ENCODE measurements at regions of chr12 and their contacts with region 1.

Region 1: DNA sequence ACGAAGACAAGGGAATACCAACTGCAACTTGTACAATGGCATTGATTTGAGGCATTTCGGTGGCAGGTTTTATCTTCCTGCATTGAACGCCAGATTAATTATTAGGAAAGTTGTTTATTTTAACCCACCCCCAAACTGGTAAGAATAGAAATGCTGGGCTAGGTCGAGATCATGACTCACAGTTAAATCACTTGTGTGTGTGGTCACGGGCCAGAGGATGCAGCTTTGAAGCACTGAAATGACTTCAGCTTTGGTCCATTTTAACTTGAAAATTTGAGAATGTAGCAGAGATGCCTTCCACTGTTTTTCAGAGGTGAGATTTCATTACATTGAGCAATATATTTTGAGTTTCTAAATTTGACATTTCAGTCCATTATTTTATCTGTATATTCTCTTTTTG is 23.6 kb upstream of the KCNH3 start:
- DNase-seq: peak; percentile 88
- ATAC-seq: peak; percentile 76
- H3K4me3 ChIP-seq: peak overlapping the region; percentile 23; the same call in 1 of the 2 replicates
- H3K27ac ChIP-seq: peak overlapping the region; percentile 44
- H3K4me1 ChIP-seq: peaks cover 40% of the 10 kb centered on the region
- H3K27me3 ChIP-seq: no peaks in the 10 kb centered on the region
- CTCF ChIP-seq: no peak

Region 2: DNA sequence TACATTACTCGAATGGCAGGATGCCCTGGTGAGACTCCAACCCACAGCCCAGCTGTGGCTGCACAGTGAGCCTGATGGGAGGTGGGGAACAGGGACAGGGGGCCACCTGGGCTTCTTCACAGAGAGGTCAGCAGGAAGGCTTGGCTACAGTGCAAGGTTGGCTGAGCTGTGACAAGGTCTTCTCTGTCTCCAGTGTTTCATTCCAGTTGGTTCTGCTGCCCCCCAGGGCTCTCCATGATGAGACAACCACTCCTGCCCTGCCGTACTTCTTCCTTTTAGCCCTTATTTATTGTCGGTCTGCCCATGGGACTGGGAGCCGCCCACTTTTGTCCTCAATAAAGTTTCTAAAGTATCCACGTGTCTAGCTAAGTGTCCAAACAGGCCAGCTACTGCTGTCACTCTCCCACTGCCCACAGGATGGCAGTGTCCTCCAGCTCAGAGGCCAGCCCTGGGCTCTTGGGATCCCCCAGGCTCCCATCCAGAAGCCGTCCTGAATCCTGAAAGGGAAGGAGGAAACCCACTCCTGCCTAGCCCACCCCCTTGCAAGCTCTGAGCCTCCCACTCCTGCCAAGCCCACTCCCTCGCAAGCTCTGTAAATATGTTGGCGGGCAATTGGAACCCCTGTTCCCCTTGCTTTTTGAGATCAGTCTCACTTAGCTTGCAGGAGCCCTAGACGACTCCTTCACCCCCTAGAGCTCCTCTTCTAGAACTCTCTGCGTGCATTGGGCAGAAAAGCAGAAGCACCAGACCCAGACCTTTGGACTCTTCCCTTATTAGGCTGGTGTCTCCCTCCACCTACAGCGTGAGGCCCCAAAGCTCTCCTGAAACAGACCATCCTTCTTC is 183.7 kb before region 1 on chr12:
- CTCF ChIA-PET with region 1: interaction called, 21 read pairs
- POLR2A ChIA-PET with region 1: interaction called, 4 read pairs
- intact Hi-C with region 1: loop called (anchors 1 kb)
- DNase-seq: peak; percentile 66
- ATAC-seq: peak; percentile 90
- H3K4me3 ChIP-seq: no peak overlapping the region
- H3K27ac ChIP-seq: no peak overlapping the region
- H3K4me1 ChIP-seq: no peaks in the 10 kb centered on the region
- H3K27me3 ChIP-seq: no peaks in the 10 kb centered on the region
- CTCF ChIP-seq: peak; percentile 88

Region 3: GRCh38 chr12:49366652-49367380 is 148.4 kb before region 1 on chr12:
- CTCF ChIA-PET with region 1: interaction called, 9 read pairs
- POLR2A ChIA-PET with region 1: interaction called, 16 read pairs
- intact Hi-C with region 1: no loop called
- DNase-seq: peak; percentile 95
- ATAC-seq: peak; percentile 82
- H3K4me3 ChIP-seq: peak overlapping the region; percentile 85
- H3K27ac ChIP-seq: peak overlapping the region; percentile 82
- H3K4me1 ChIP-seq: peaks cover 37% of the 10 kb centered on the region
- H3K27me3 ChIP-seq: no peaks in the 10 kb centered on the region
- CTCF ChIP-seq: peak; percentile 16; the same call in 1 of the 2 replicates

Region 4: DNA sequence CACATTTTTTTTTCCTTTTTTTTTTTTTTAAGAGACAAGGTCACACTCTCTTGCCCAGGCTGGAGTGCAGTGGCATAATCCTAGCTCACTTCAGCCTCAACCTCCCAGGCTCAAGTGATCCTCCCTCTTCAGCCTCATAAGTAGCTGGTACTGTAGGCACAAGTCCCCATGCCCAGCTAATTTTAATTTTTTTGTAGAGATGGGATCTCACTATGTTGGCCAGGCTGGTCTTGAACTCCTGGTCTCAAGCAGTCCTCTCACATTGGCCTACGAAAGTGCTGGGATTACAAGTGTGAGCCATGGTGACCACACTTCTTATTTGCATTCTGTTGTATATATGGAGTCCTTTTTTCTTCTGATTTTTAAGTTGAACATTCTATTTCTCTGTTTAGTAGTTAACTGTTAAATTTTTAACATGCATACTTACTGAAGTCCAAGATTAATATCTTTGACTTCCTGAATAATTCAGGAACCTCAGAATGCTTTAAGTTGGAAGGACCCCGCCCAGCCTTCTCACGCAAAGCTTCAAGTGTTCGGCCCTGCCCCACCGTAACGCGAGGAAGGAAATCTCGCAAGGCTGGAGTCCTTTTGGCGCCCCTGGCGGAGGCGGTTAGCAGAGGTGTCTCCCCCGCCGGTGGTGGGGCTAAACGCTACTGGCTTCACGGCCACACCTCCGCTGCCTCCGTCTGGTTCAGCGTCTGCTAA is 126.4 kb before region 1 on chr12:
- CTCF ChIA-PET with region 1: no interaction called
- POLR2A ChIA-PET with region 1: no interaction called
- intact Hi-C with region 1: no loop called
- DNase-seq: no peak
- ATAC-seq: no peak
- H3K4me3 ChIP-seq: no peak overlapping the region
- H3K27ac ChIP-seq: no peak overlapping the region
- H3K4me1 ChIP-seq: no peaks in the 10 kb centered on the region
- H3K27me3 ChIP-seq: no peaks in the 10 kb centered on the region
- CTCF ChIP-seq: no peak

Region 5: GRCh38 chr12:49553512-49554088 is 38.3 kb after region 1 on chr12:
- CTCF ChIA-PET with region 1: interaction called, 3 read pairs
- POLR2A ChIA-PET with region 1: interaction called, 3 read pairs
- intact Hi-C with region 1: loop called (anchors 2 kb)
- DNase-seq: peak; percentile 60
- ATAC-seq: peak; percentile 79
- H3K4me3 ChIP-seq: no peak overlapping the region
- H3K27ac ChIP-seq: no peak overlapping the region
- H3K4me1 ChIP-seq: no peaks in the 10 kb centered on the region
- H3K27me3 ChIP-seq: no peaks in the 10 kb centered on the region
- CTCF ChIP-seq: peak; percentile 84

Region 6: DNA sequence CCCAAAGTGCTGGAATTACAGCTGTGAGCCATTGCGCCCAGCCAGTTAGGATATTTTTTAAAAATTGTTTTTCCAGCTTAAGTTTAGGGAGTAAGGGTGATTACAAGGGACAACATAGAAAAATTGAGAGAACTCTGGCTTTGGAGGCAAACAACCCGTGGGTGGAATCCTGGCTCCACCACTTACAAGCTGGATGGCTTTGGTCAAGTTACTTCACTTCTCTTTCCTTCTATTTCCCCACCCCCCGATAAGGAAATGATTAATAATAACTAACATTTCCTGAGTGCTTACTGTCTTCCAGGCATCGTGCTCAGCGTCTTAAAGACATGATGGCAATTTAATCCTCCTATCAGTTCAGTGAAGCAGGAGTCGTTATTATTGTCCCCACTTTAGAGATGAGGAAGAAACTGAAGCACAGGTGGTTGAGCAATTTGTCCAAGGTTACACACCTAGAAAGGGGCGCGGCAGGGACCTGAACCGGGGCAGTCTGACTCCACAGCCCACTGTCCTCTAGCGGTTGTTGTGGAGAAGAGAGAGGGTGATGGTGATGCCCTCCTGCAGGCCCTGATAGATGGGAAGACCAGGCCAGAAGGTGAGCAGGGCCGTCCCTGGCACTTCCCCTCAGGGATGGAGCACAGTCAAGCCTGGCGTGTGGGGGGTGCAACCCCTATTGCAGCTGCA is 405.1 kb after region 1 on chr12:
- CTCF ChIA-PET with region 1: no interaction called
- POLR2A ChIA-PET with region 1: no interaction called
- intact Hi-C with region 1: no loop called
- DNase-seq: peak; percentile 23
- ATAC-seq: peak; percentile 37
- H3K4me3 ChIP-seq: no peak overlapping the region
- H3K27ac ChIP-seq: no peak overlapping the region
- H3K4me1 ChIP-seq: peaks cover 5% of the 10 kb centered on the region
- H3K27me3 ChIP-seq: no peaks in the 10 kb centered on the region
- CTCF ChIP-seq: no peak